Dendritic cell treated with granulocyte-macrophage colony-stimulating factor and Interleukin-4, amounts not matched to agents 40 ng/mL and 50 ng/mL, for 4 days (primary cell): ENCODE measurements at regions of chr1 and their contacts with region 1.

Region 1: GRCh38 chr1:152122434-152122833 is 7.2 kb upstream of the TCHH start:
- H3K4me3 Mint-ChIP-seq: no peak overlapping the region
- H3K27ac Mint-ChIP-seq: no peak overlapping the region
- H3K4me1 Mint-ChIP-seq: no peaks in the 10 kb centered on the region
- H3K27me3 Mint-ChIP-seq: peaks cover 45% of the 10 kb centered on the region

Region 2: GRCh38 chr1:151888972-151889570 is 233.4 kb before region 1 on chr1:
- intact Hi-C with region 1: no loop called
- H3K4me3 Mint-ChIP-seq: no peak overlapping the region
- H3K27ac Mint-ChIP-seq: no peak overlapping the region
- H3K4me1 Mint-ChIP-seq: peaks cover 7% of the 10 kb centered on the region
- H3K27me3 Mint-ChIP-seq: no peaks in the 10 kb centered on the region

Region 3: GRCh38 chr1:152061952-152062351 is 60.5 kb before region 1 on chr1:
- intact Hi-C with region 1: loop called (anchors 5 kb)
- H3K4me3 Mint-ChIP-seq: no peak overlapping the region
- H3K27ac Mint-ChIP-seq: no peak overlapping the region
- H3K4me1 Mint-ChIP-seq: peaks cover 4% of the 10 kb centered on the region
- H3K27me3 Mint-ChIP-seq: peaks cover 24% of the 10 kb centered on the region

Region 4: GRCh38 chr1:152089014-152089676 is 33.3 kb before region 1 on chr1 and contains the start of gene TCHHL1:
- intact Hi-C with region 1: no loop called
- H3K4me3 Mint-ChIP-seq: no peak within 1 kb of the TSS
- H3K27ac Mint-ChIP-seq: no peak within 1 kb of the TSS
- H3K4me1 Mint-ChIP-seq: peaks cover 7% of the 10 kb centered on the region
- H3K27me3 Mint-ChIP-seq: peaks cover 15% of the 10 kb centered on the region